Mammary epithelial cell (primary cell): ENCODE measurements at regions of chr11 and their contacts with region 1.

Region 1: DNA sequence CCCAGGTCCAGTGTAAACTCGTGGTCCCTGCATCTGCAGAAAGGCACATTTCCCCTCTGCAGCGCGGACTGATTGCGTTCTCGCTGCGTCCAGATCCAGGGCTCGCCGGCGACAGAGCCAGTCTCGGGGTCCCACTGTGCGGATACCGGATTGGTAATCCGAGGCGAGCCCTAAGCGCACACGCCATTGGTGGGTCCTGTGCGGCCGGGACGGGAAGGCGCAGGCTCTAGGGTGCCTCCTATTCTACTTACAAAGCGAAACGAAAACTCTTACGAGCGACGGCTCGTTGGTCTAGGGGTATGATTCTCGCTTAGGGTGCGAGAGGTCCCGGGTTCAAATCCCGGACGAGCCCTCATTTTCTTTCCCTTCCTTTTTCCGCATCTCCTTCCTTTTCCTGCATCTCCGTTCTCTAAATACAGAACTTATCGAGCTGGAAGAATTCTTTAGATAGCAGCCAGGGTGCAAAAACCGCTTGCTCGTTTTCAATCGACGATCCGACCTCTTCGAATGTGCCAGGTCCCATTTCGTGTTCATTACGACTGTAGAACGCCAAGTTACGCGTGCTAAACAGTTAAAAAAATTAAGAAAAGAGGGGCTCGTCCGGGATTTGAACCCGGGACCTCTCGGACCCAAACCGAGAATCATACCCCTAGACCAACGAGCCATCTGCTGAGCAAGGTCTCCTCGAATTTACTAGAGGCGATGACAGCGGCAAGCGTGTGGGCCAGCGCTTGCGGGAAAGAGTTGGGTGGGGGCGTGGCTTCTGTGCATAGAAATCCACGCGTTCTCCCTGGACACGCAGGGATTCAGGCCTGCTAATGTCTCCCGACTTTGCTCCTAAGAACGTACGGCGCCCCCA is 29.2 kb upstream of the WNT11 start:
- DNase-seq: peak; percentile 85
- H3K4me3 ChIP-seq: peak overlapping the region; percentile 59 to 88 (median 78)
- H3K27ac ChIP-seq: peak overlapping the region; percentile 11
- H3K4me1 ChIP-seq: peaks cover 16% of the 10 kb centered on the region
- H3K27me3 ChIP-seq: no peaks in the 10 kb centered on the region
- CTCF ChIP-seq: no peak

Region 2: GRCh38 chr11:74748211-74749127 is 1487.0 kb before region 1 on chr11 and contains the start of gene RNF169:
- CTCF ChIA-PET with region 1: no interaction called
- dilution Hi-C with region 1: no loop called
- in situ Hi-C with region 1: no loop called
- intact Hi-C with region 1: loop called (anchors 5 kb)
- DNase-seq: peak; percentile 93
- H3K4me3 ChIP-seq: peak within 1 kb of the TSS; percentile 65 to 78 (median 72)
- H3K27ac ChIP-seq: peak within 1 kb of the TSS; percentile 64
- H3K4me1 ChIP-seq: peaks cover 11% of the 10 kb centered on the region
- H3K27me3 ChIP-seq: no peaks in the 10 kb centered on the region
- CTCF ChIP-seq: no peak
- total RNA-seq, gene RNF169: 17.2 to 18.7 TPM

Region 3: GRCh38 chr11:76207642-76208401 is 27.6 kb before region 1 on chr11:
- CTCF ChIA-PET with region 1: no interaction called
- dilution Hi-C with region 1: no loop called
- in situ Hi-C with region 1: no loop called
- intact Hi-C with region 1: loop called (anchors 1 kb)
- DNase-seq: peak; percentile 68
- H3K4me3 ChIP-seq: peak overlapping the region; percentile 30 to 48 (median 35)
- H3K27ac ChIP-seq: no peak overlapping the region
- H3K4me1 ChIP-seq: peaks cover 40% of the 10 kb centered on the region
- H3K27me3 ChIP-seq: peaks cover 37% of the 10 kb centered on the region
- CTCF ChIP-seq: peak; percentile 83 to 95

Region 4: GRCh38 chr11:76266270-76267090 is 31.0 kb after region 1 on chr11:
- CTCF ChIA-PET with region 1: no interaction called
- dilution Hi-C with region 1: loop called (anchors 5 kb)
- in situ Hi-C with region 1: no loop called
- intact Hi-C with region 1: loop called (anchors 1 kb)
- DNase-seq: peak; percentile 88
- H3K4me3 ChIP-seq: no peak overlapping the region
- H3K27ac ChIP-seq: peak overlapping the region; percentile 77
- H3K4me1 ChIP-seq: peaks cover 18% of the 10 kb centered on the region
- H3K27me3 ChIP-seq: no peaks in the 10 kb centered on the region
- CTCF ChIP-seq: no peak

Region 5: DNA sequence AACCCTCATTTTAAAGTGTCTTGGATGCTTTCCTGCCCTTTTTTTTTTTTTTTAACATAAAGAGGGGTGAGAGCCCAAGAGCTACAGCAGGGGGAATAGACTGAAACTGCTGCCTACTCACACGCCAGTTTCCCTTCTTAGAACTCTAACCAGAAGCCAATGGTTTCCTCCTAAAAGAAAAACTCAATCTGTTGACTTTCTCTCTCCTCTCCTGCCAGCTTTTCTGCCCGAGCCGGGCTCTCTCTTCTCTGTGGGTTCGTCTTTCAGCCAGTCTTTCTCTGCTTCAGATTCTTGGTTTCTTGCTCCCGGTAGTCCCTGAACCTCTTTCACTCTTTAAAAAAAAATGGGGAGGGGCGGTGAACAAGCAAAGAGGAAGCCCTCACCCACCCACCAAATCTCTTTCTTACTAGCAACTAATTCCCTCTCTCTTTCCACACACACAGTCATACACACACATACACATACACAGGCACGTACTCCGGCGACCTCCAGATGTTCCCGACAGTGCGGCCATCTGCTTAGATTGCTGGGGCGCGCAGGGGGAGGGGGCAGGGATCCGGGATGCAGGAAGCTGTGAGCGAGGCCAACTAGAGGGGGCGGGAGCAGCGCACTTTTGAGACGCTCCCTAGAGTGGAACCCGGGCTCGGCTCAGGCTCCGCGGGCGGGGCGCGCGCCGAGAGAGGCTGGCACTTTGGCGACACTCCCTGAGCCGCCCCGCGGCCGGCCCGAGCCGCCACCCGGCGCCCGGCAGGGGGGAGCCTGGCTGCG is 547.2 kb after region 1 on chr11:
- CTCF ChIA-PET with region 1: no interaction called
- dilution Hi-C with region 1: no loop called
- in situ Hi-C with region 1: no loop called
- intact Hi-C with region 1: loop called (anchors 10 kb)
- DNase-seq: peak; percentile 92
- H3K4me3 ChIP-seq: peak overlapping the region; percentile 86 to 98 (median 97)
- H3K27ac ChIP-seq: peak overlapping the region; percentile 89
- H3K4me1 ChIP-seq: peaks cover 42% of the 10 kb centered on the region
- H3K27me3 ChIP-seq: no peaks in the 10 kb centered on the region
- CTCF ChIP-seq: no peak